Aorta (tissue), 5 donors: ENCODE measurements at regions of chr6 and their contacts with region 1.

Region 1: DNA sequence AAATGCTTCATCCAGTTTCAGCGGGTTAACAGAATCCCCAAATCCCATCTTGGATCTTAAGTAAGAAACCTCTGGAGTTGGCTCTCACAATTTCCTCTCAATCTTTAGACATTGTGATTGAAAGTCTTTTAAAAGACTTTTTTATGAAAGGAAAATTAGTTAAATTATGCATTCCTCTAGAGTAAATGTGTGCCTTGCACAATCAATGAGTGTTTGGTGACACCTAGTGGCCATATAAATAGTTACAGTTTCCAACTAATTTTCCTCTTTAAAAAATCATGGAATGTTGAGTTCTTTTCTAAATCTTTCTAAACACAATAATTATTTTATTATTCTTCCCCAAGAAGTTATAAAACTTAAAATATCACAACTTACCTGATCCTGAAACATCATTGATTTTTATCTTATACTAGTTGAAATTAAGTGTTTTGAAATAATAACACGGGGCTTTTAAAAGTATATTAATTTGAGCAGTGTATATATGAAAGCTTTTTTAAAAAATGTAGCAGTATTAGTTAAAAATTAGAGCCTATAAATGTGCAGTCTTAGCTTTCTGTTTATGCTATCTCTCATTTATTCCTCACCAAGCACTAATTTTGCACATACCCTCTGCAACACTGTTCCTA is 66.4 kb downstream of the PKHD1 start:
- DNase-seq: no peak
- ATAC-seq: no peak
- H3K4me3 ChIP-seq: no peak overlapping the region
- H3K27ac ChIP-seq: no peak overlapping the region
- H3K4me1 ChIP-seq: no peaks in the 10 kb centered on the region
- H3K27me3 ChIP-seq: no peaks in the 10 kb centered on the region

Region 2: GRCh38 chr6:50816115-50816675 is 1204.9 kb before region 1 on chr6:
- intact Hi-C with region 1: loop called in 1 of 2 experiments (anchors 5 kb)
- DNase-seq: peak; percentile 57 to 84
- ATAC-seq: no peak
- H3K4me3 ChIP-seq: peak overlapping the region in 1 of 2 donors; percentile 57
- H3K27ac ChIP-seq: no peak overlapping the region
- H3K4me1 ChIP-seq: no peaks in the 10 kb centered on the region
- H3K27me3 ChIP-seq: no peaks in the 10 kb centered on the region

Region 3: GRCh38 chr6:51855310-51856082 is 165.6 kb before region 1 on chr6:
- intact Hi-C with region 1: loop called (anchors 5 to 10 kb)
- DNase-seq: no peak
- ATAC-seq: no peak
- H3K4me3 ChIP-seq: no peak overlapping the region
- H3K27ac ChIP-seq: no peak overlapping the region
- H3K4me1 ChIP-seq: no peaks in the 10 kb centered on the region
- H3K27me3 ChIP-seq: no peaks in the 10 kb centered on the region

Region 4: GRCh38 chr6:52201046-52201445 is 180.0 kb after region 1 on chr6:
- intact Hi-C with region 1: no loop called
- DNase-seq: no peak
- ATAC-seq: no peak
- H3K4me3 ChIP-seq: no peak overlapping the region
- H3K27ac ChIP-seq: no peak overlapping the region
- H3K4me1 ChIP-seq: no peaks in the 10 kb centered on the region
- H3K27me3 ChIP-seq: no peaks in the 10 kb centered on the region